HepG2 (cell line): ENCODE measurements at regions of chr17 and their contacts with region 1.

Region 1: GRCh38 chr17:8005960-8006730 is 3.7 kb downstream of the GUCY2D start:
- DNase-seq: no peak
- ATAC-seq: no peak
- H3K4me3 ChIP-seq: no peak overlapping the region
- H3K27ac ChIP-seq: no peak overlapping the region
- H3K4me1 ChIP-seq: peaks cover 5% of the 10 kb centered on the region
- H3K27me3 ChIP-seq: peaks cover 3 to 67% of the 10 kb centered on the region in 2 experiments
- CTCF ChIP-seq: no peak
- EP300 ChIP-seq: no peak
- POLR2A ChIP-seq: no peak
- RAD21 ChIP-seq: no peak

Region 2: GRCh38 chr17:7818746-7819645 is 187.1 kb before region 1 on chr17:
- CTCF ChIA-PET with region 1: no interaction called
- POLR2A ChIA-PET with region 1: no interaction called
- in situ Hi-C with region 1: no loop called
- intact Hi-C with region 1: no loop called
- DNase-seq: no peak
- ATAC-seq: no peak
- H3K4me3 ChIP-seq: no peak overlapping the region
- H3K27ac ChIP-seq: no peak overlapping the region
- H3K4me1 ChIP-seq: no peaks in the 10 kb centered on the region
- H3K27me3 ChIP-seq: peaks cover 1 to 46% of the 10 kb centered on the region in 2 experiments; a peak in 4 of 5 replicates
- CTCF ChIP-seq: no peak
- EP300 ChIP-seq: no peak
- POLR2A ChIP-seq: no peak
- RAD21 ChIP-seq: no peak

Region 3: GRCh38 chr17:8048236-8048635 is 42.1 kb after region 1 on chr17:
- CTCF ChIA-PET with region 1: no interaction called
- POLR2A ChIA-PET with region 1: no interaction called
- in situ Hi-C with region 1: no loop called
- intact Hi-C with region 1: loop called (anchors 2 kb)
- DNase-seq: no peak
- ATAC-seq: no peak
- H3K4me3 ChIP-seq: no peak overlapping the region
- H3K27ac ChIP-seq: no peak overlapping the region
- H3K4me1 ChIP-seq: no peaks in the 10 kb centered on the region
- H3K27me3 ChIP-seq: peaks cover 12 to 84% of the 10 kb centered on the region in 2 experiments; a peak in 4 of 5 replicates
- CTCF ChIP-seq: no peak
- EP300 ChIP-seq: no peak
- POLR2A ChIP-seq: no peak
- RAD21 ChIP-seq: no peak